ENCODE measurements at regions of chr3 and their contacts with region 1.

Region 1: DNA sequence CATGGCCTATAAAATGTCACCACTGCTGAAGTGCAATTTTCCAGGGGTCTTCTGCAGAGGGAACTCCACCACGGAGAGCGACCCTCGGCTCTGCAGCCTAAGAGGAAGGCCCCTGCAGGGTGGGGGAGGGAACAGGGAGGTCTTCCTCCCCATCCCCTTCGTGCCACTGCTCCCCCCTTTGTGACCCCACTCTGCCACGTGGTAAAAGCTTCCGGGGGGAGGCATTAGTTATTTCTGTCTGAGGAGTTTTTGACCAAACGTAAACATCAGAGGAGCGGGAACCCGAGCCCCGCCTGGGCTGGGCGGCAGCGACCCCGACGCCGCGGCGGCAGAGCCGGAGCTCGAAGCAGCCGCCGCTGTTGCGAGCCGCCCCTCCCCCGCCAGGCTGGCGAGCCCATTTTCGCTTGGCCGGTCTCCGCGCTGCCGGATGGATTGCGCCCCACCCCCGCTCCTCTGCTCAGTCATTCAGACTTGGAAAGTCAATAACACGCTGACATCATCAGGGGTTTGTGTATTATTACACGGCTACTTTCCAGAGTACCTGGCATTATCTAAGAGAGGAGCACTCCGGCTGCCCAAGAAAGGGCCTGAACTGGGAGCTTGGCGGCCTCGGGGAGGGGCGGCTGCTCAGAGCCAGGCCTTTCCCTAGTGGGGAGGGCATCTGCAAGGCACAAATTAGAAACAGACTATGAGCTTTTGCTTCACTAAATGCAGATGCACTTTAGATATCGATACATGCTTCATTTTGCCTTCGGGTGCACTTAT is 162.5 kb upstream of the TBL1XR1 start:
- DNase-seq: peak; percentile 99
- H3K4me3 Mint-ChIP-seq: peak overlapping the region; percentile 63
- H3K27ac Mint-ChIP-seq: peak overlapping the region; percentile 71
- H3K4me1 Mint-ChIP-seq: peaks cover 60% of the 10 kb centered on the region
- H3K27me3 Mint-ChIP-seq: no peaks in the 10 kb centered on the region
- CTCF ChIP-seq: no peak

Region 2: DNA sequence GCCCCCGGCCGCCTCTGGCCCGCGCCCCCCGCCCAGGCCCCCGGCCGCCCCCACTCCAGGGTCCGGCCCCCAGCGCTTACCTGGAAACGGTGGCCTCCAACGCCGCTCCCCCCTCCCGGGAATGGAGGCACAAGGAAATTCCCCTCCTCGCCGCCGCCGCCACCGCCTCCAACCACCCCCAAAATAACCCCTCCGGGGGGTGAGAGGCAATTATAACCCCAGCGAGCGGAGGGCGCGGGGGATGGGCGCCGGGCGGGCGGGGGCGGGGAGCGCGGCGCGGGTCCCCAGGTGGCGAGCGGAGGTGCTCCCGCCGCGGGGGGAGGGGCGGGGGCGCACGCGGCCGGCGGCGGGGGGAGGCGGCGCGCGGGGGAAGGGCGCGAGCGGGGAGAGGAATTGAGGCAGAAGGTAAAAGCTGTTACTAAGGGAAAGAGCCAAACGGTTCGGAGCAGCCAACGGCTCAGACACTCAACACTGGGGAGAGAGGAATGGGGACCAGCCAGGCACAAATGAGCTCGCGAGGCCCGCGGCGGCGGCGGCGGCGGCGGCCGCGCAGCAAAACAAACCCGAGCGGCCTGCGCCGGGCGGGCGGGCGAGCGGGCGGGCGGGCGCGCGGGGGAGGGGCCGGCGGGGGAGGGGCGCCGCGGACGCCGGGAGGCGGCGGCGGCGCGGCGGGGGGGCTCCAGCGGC is 162.6 kb before region 1 on chr3 and contains the start of gene TBL1XR1:
- CTCF ChIA-PET with region 1: interaction called, 10 read pairs
- intact Hi-C with region 1: loop called (anchors 1 kb)
- DNase-seq: peak; percentile 94
- H3K4me3 Mint-ChIP-seq: peak within 1 kb of the TSS; percentile 70
- H3K27ac Mint-ChIP-seq: peak within 1 kb of the TSS; percentile 71
- H3K4me1 Mint-ChIP-seq: peaks cover 32% of the 10 kb centered on the region
- H3K27me3 Mint-ChIP-seq: no peaks in the 10 kb centered on the region
- CTCF ChIP-seq: no peak
- total RNA-seq, gene TBL1XR1: 199 and 206 TPM in 2 replicates

Region 3: GRCh38 chr3:177300039-177300833 is 59.5 kb before region 1 on chr3:
- CTCF ChIA-PET with region 1: interaction called, 5 read pairs
- intact Hi-C with region 1: loop called (anchors 2 kb)
- DNase-seq: peak; percentile 72
- H3K4me3 Mint-ChIP-seq: peak overlapping the region; percentile 50
- H3K27ac Mint-ChIP-seq: peak overlapping the region; percentile 86
- H3K4me1 Mint-ChIP-seq: peaks cover 39% of the 10 kb centered on the region
- H3K27me3 Mint-ChIP-seq: no peaks in the 10 kb centered on the region
- CTCF ChIP-seq: no peak

Region 4: DNA sequence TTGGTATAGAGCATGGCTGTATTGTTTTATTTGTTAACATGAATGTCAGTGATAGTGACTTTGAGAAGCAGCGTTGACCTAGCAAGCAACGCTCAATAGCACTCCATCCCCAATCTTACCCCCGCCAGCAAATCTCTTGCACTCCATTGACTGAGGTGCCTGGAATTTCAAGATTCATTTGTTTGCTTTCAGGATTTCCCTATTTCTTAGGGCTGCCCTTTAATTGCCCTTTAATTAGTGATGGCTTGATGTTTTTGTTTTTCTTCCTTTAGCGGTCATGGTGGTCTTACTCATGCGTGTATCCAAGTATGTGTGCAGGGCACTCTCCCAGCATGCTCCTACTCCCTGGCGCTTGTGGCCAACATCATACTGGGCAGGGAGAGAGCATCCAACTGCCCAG is 54.3 kb after region 1 on chr3:
- CTCF ChIA-PET with region 1: no interaction called
- intact Hi-C with region 1: no loop called
- DNase-seq: no peak
- H3K4me3 Mint-ChIP-seq: no peak overlapping the region
- H3K27ac Mint-ChIP-seq: no peak overlapping the region
- H3K4me1 Mint-ChIP-seq: peaks cover 9% of the 10 kb centered on the region
- H3K27me3 Mint-ChIP-seq: no peaks in the 10 kb centered on the region
- CTCF ChIP-seq: no peak

Region 5: GRCh38 chr3:177478170-177478860 is 118.5 kb after region 1 on chr3:
- CTCF ChIA-PET with region 1: interaction called, 4 read pairs
- intact Hi-C with region 1: loop called (anchors 2 kb)
- DNase-seq: peak; percentile 77
- H3K4me3 Mint-ChIP-seq: peak overlapping the region; percentile 16
- H3K27ac Mint-ChIP-seq: peak overlapping the region; percentile 4
- H3K4me1 Mint-ChIP-seq: peaks cover 39% of the 10 kb centered on the region
- H3K27me3 Mint-ChIP-seq: no peaks in the 10 kb centered on the region
- CTCF ChIP-seq: no peak

Region 6: DNA sequence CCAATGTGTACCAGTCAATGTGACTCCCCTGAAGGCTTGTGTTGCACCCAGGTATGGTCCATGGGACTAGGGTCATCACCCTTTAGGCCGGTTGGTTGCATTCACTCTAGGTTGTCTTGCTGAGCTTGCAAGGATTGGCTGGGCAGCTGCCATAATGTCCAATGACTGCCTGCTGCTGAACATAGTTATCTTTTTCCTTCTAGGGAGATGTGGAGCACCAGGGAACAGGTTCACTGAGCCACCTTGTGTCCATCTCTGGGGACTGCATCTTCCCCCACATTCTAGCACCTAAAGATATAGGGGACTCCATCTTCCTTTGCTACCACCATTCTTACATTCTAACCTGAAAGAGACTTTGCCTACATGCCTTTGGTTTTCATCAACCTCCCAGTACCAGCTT is 417.9 kb after region 1 on chr3:
- CTCF ChIA-PET with region 1: no interaction called
- intact Hi-C with region 1: loop called (anchors 1 kb)
- DNase-seq: peak; percentile 75
- H3K4me3 Mint-ChIP-seq: no peak overlapping the region
- H3K27ac Mint-ChIP-seq: no peak overlapping the region
- H3K4me1 Mint-ChIP-seq: peaks cover 12% of the 10 kb centered on the region
- H3K27me3 Mint-ChIP-seq: no peaks in the 10 kb centered on the region
- CTCF ChIP-seq: peak; percentile 95

Region 7: DNA sequence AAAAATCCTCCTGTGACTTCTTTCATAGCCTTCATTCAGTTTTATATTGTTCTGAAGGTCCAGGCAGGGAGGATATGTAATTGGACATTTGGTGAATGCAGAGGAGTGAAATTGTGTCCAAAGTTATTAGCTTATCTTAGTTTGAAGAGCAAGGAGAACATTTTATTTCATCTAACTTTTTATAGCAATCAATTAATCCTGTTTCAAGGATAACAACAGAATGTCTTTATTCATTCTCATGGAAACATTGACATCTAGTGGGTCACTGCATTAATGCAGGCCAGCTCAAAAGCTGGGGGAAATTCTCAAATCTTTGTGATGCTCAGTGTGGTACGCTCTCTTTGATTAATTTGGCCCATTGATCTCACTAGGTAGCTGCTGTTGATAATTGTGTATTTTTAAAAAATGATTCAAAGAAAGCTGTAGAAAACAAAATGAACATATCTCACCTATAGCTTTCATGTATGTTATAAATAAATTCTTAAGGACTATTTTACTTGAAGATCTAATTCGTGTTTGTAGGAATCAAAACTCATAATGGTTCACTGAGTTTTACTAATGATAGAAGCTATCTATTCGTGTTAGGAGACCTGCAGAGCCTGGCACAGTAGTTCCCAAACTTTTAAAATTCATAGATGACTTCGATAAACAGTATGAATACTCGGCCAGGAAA is 1025.6 kb after region 1 on chr3:
- CTCF ChIA-PET with region 1: no interaction called
- intact Hi-C with region 1: loop called (anchors 1 kb)
- DNase-seq: peak; percentile 61
- H3K4me3 Mint-ChIP-seq: no peak overlapping the region
- H3K27ac Mint-ChIP-seq: no peak overlapping the region
- H3K4me1 Mint-ChIP-seq: no peaks in the 10 kb centered on the region
- H3K27me3 Mint-ChIP-seq: no peaks in the 10 kb centered on the region
- CTCF ChIP-seq: peak; percentile 78